Activated CD4-positive, alpha-beta T cell treated with anti-CD3 and anti-CD28 coated beads for 36 hours (primary cell): ENCODE measurements at regions of chr1 and their contacts with region 1.

Region 1: GRCh38 chr1:110495926-110496600 is 22.9 kb downstream of the KCNA10 start:
- DNase-seq: peak; percentile 90
- ATAC-seq: peak; percentile 92
- H3K4me3 Mint-ChIP-seq: no peak overlapping the region
- H3K27ac Mint-ChIP-seq: no peak overlapping the region
- H3K4me1 Mint-ChIP-seq: no peaks in the 10 kb centered on the region
- H3K27me3 Mint-ChIP-seq: peaks cover 3% of the 10 kb centered on the region

Region 2: GRCh38 chr1:109979489-109980091 is 516.5 kb before region 1 on chr1:
- CTCF ChIA-PET with region 1: no interaction called
- POLR2A ChIA-PET with region 1: no interaction called
- intact Hi-C with region 1: no loop called
- DNase-seq: no peak
- ATAC-seq: no peak
- H3K4me3 Mint-ChIP-seq: no peak overlapping the region
- H3K27ac Mint-ChIP-seq: no peak overlapping the region
- H3K4me1 Mint-ChIP-seq: no peaks in the 10 kb centered on the region
- H3K27me3 Mint-ChIP-seq: peaks cover 4% of the 10 kb centered on the region

Region 3: GRCh38 chr1:110203021-110203661 is 292.9 kb before region 1 on chr1:
- CTCF ChIA-PET with region 1: interaction called, 121 read pairs
- POLR2A ChIA-PET with region 1: no interaction called
- intact Hi-C with region 1: loop called (anchors 1 kb)
- DNase-seq: peak; percentile 82
- ATAC-seq: peak; percentile 63
- H3K4me3 Mint-ChIP-seq: no peak overlapping the region
- H3K27ac Mint-ChIP-seq: peak overlapping the region; percentile 79
- H3K4me1 Mint-ChIP-seq: peaks cover 15% of the 10 kb centered on the region
- H3K27me3 Mint-ChIP-seq: no peaks in the 10 kb centered on the region

Region 4: GRCh38 chr1:110407260-110408210 is 88.5 kb before region 1 on chr1 and contains the start of gene LAMTOR5:
- CTCF ChIA-PET with region 1: interaction called, 94 read pairs
- POLR2A ChIA-PET with region 1: no interaction called
- intact Hi-C with region 1: loop called (anchors 1 kb)
- DNase-seq: peak; percentile 95
- ATAC-seq: peak; percentile 93
- H3K4me3 Mint-ChIP-seq: peak within 1 kb of the TSS; percentile 98
- H3K27ac Mint-ChIP-seq: peak within 1 kb of the TSS; percentile 100
- H3K4me1 Mint-ChIP-seq: peaks cover 17% of the 10 kb centered on the region
- H3K27me3 Mint-ChIP-seq: no peaks in the 10 kb centered on the region
- total RNA-seq, gene LAMTOR5: 141 to 155 TPM

Region 5: DNA sequence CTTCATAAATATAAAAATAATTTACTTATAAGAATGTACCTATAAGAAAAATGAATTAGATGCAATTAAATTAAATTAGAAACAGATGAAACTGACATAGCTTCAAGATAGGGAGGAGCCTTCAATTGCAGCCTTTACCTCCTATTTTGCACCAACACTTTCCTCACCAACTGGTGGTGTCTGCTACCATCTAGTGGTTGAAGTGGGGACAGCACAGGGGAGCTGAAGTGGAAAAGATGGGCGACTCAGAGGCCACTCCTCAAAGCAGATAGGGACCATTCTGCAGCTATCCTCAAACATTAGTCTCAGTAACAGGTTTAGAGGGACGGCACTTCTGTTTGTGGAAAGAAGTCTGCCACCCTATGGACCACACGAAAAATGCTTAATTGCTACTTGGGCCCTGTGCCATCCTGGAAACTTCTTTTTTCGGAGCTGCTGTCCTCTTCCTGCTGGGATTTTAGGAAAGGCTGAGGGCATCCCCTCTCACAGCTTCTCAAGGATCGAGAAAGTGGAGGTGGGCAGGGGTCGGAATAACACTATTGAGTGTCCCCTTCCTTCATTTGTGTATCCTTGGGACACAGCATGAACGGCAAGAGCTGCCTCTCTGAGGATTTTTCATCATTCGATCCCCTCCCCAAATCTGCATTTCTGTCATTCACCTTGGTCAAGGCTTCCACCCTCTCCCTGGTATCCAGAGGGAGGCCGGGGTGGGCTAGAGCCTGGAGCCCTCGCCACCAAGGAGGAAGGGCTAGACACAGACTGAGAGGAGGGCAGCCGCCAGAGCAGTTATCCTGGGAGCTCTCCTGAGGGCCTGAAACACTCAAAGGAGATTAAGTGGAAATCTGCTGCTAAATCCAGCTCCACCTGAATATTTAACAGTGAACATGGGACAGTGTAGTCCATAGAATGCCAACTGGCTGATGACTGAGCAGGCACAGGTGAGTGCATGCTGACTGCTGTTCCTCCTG is 35.5 kb before region 1 on chr1:
- CTCF ChIA-PET with region 1: interaction called, 49 read pairs
- POLR2A ChIA-PET with region 1: no interaction called
- intact Hi-C with region 1: loop called in 1 of 2 experiments (anchors 1 kb)
- DNase-seq: peak; percentile 88
- ATAC-seq: peak; percentile 95
- H3K4me3 Mint-ChIP-seq: no peak overlapping the region
- H3K27ac Mint-ChIP-seq: no peak overlapping the region
- H3K4me1 Mint-ChIP-seq: no peaks in the 10 kb centered on the region
- H3K27me3 Mint-ChIP-seq: no peaks in the 10 kb centered on the region

Region 6: DNA sequence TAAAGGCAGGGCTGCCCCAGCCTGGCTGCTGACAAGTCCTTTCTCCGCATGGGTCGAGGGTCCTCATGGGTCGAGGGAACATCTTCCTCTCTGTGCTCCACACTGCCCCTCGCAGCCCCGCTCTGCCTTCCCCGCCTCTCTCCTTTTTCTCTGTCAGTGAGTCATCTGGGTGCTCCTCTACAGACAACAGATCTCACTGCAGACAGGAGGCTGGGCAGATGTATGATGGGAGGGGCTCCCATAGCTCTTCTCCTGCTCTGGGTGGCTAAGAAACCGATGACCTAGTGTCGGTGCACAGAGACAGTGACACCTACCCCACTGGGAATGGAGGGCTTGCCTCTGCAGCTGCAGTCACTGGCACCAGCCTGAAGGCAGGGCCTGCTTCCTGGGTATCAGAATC is 17.4 kb after region 1 on chr1:
- CTCF ChIA-PET with region 1: interaction called, 55 read pairs
- POLR2A ChIA-PET with region 1: no interaction called
- intact Hi-C with region 1: no loop called
- DNase-seq: no peak
- ATAC-seq: peak; percentile 30
- H3K4me3 Mint-ChIP-seq: no peak overlapping the region
- H3K27ac Mint-ChIP-seq: no peak overlapping the region
- H3K4me1 Mint-ChIP-seq: no peaks in the 10 kb centered on the region
- H3K27me3 Mint-ChIP-seq: peaks cover 5% of the 10 kb centered on the region